ENCODE measurements at regions of chr14 and their contacts with region 1.

Region 1: GRCh38 chr14:64891839-64892375 is 12.2 kb upstream of the SPTB start:
- DNase-seq: peak; percentile 63
- ATAC-seq: peak; percentile 65
- H3K4me3 ChIP-seq: no peak overlapping the region
- H3K4me3 Mint-ChIP-seq: no peak overlapping the region
- H3K27ac ChIP-seq: no peak overlapping the region
- H3K27ac Mint-ChIP-seq: no peak overlapping the region
- H3K4me1 ChIP-seq: no peaks in the 10 kb centered on the region
- H3K4me1 Mint-ChIP-seq: no peaks in the 10 kb centered on the region
- H3K27me3 ChIP-seq: peaks cover 0 to 5% (median 2%) of the 10 kb centered on the region in 4 experiments
- H3K27me3 Mint-ChIP-seq: peaks cover 27% of the 10 kb centered on the region
- CTCF ChIP-seq: peak; percentile 74

Region 2: DNA sequence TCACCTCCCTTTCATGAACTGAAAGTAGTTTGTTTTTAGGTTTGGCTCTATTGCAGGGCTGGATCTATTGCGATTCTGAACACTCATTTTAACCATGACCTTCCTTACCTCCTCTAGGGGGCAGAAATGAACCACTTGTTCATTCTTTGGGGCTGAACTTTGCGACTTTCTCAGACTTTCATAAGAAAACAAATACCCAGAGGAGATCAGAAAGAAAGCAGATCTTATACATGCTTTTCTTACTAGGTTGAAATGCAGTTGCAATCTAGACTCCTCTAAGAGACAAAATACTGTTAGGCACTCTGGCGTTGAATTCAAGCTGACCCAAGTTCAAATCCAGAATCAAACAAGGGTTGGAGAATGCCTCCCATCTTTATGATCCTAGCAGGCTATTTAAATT is 220.3 kb before region 1 on chr14:
- CTCF ChIA-PET with region 1: interaction called, 16 read pairs
- POLR2A ChIA-PET with region 1: no interaction called
- intact Hi-C with region 1: loop called (anchors 5 kb)
- DNase-seq: peak; percentile 45
- ATAC-seq: no peak
- H3K4me3 ChIP-seq: no peak overlapping the region
- H3K4me3 Mint-ChIP-seq: no peak overlapping the region
- H3K27ac ChIP-seq: no peak overlapping the region
- H3K27ac Mint-ChIP-seq: no peak overlapping the region
- H3K4me1 ChIP-seq: no peaks in the 10 kb centered on the region
- H3K4me1 Mint-ChIP-seq: peaks cover 4% of the 10 kb centered on the region
- H3K27me3 ChIP-seq: peaks cover 0 to 7% (median 2%) of the 10 kb centered on the region in 4 experiments
- H3K27me3 Mint-ChIP-seq: peaks cover 20% of the 10 kb centered on the region
- CTCF ChIP-seq: peak; percentile 62

Region 3: GRCh38 chr14:64764641-64765520 is 127.0 kb before region 1 on chr14:
- CTCF ChIA-PET with region 1: interaction called, 16 read pairs
- POLR2A ChIA-PET with region 1: no interaction called
- intact Hi-C with region 1: loop called (anchors 5 kb)
- DNase-seq: peak; percentile 73
- ATAC-seq: peak; percentile 73
- H3K4me3 ChIP-seq: peak overlapping the region in 1 of 5 experiments; percentile 15
- H3K4me3 Mint-ChIP-seq: peak overlapping the region; percentile 54
- H3K27ac ChIP-seq: no peak overlapping the region
- H3K27ac Mint-ChIP-seq: no peak overlapping the region
- H3K4me1 ChIP-seq: peaks cover 6% of the 10 kb centered on the region in 2 donors
- H3K4me1 Mint-ChIP-seq: peaks cover 13% of the 10 kb centered on the region
- H3K27me3 ChIP-seq: peaks cover 0 to 14% (median 6%) of the 10 kb centered on the region in 4 experiments
- H3K27me3 Mint-ChIP-seq: peaks cover 30% of the 10 kb centered on the region
- CTCF ChIP-seq: peak; percentile 73

Region 4: DNA sequence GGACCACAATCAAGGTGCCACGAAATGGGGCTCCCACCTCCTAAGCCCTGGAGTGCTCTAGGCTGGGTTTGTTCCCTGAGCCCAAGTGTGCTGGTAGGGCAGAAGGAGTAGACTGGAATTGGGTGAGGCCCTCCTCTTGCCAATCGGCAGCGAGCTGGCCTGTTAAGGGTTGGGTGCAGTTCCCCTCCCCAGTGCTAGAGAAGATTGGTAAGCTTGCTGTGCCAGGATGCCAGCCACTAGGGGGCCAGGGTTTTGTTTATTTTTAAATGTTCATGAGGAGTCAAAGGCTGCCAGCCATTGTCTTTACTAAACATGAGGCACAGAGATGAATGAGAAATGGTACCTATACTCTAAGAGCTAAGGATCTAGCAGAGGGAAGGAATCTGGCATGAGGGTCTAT is 91.9 kb before region 1 on chr14:
- CTCF ChIA-PET with region 1: interaction called, 64 read pairs
- POLR2A ChIA-PET with region 1: no interaction called
- intact Hi-C with region 1: loop called (anchors 5 kb)
- DNase-seq: no peak
- ATAC-seq: no peak
- H3K4me3 ChIP-seq: no peak overlapping the region
- H3K4me3 Mint-ChIP-seq: no peak overlapping the region
- H3K27ac ChIP-seq: no peak overlapping the region
- H3K27ac Mint-ChIP-seq: no peak overlapping the region
- H3K4me1 ChIP-seq: no peaks in the 10 kb centered on the region
- H3K4me1 Mint-ChIP-seq: no peaks in the 10 kb centered on the region
- H3K27me3 ChIP-seq: peaks cover 0 to 6% (median 0%) of the 10 kb centered on the region in 4 experiments
- H3K27me3 Mint-ChIP-seq: peaks cover 32% of the 10 kb centered on the region
- CTCF ChIP-seq: peak; percentile 22

Region 5: DNA sequence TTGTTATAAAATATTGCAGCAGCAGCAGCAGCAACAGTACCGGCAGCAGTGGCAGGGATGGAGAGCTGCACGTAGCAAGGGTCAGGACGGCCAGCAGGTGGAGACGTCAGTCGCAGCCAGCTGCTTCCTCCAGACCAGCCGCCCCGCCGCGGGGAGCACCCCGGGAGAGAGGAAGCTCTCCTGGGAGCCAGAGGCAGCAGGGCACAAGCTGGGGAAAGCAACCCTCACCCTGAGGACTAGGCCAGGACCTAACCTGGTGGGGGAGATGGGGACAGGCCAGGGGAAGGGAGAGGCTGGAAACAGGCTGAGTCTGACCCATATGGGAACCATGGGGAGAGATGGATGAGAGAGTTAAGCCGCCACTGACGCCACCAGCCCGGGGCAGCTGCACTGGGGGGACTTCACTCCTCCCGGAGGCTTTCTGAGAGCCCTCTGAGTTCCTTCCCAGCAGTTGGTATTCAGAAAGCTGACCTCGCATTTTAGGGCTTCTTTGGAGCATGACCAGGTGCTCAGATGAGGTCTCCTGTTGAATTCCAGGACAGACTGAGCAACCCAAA is 68.5 kb before region 1 on chr14:
- CTCF ChIA-PET with region 1: interaction called, 105 read pairs
- POLR2A ChIA-PET with region 1: no interaction called
- intact Hi-C with region 1: loop called (anchors 5 kb)
- DNase-seq: peak; percentile 67
- ATAC-seq: peak; percentile 78
- H3K4me3 ChIP-seq: no peak overlapping the region
- H3K4me3 Mint-ChIP-seq: no peak overlapping the region
- H3K27ac ChIP-seq: no peak overlapping the region
- H3K27ac Mint-ChIP-seq: no peak overlapping the region
- H3K4me1 ChIP-seq: peaks cover 6 to 7% of the 10 kb centered on the region in 2 donors
- H3K4me1 Mint-ChIP-seq: peaks cover 6% of the 10 kb centered on the region
- H3K27me3 ChIP-seq: peaks cover 0 to 15% (median 3%) of the 10 kb centered on the region in 4 experiments
- H3K27me3 Mint-ChIP-seq: peaks cover 54% of the 10 kb centered on the region
- CTCF ChIP-seq: peak; percentile 71

Region 6: DNA sequence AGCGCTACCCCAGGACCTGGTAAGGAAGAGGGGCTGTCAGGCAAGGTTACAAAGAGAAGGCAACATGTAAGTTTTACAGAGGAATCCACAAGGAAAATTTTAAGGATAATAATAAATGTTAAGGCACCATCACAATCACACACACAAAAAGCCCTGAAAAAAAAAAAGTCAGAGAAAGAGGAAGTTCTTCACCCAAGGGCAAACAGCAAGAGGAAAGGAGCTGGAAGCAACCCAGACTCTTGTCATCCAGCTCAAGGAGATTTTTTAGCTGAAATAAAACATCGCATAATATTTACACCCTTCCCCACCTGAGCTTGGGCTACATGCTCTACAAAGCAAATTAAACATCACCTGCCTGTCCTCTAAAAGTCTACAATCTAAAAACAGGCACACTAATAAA is 21.7 kb before region 1 on chr14:
- CTCF ChIA-PET with region 1: interaction called, 17 read pairs
- POLR2A ChIA-PET with region 1: no interaction called
- intact Hi-C with region 1: no loop called
- DNase-seq: peak; percentile 24
- ATAC-seq: no peak
- H3K4me3 ChIP-seq: no peak overlapping the region
- H3K4me3 Mint-ChIP-seq: no peak overlapping the region
- H3K27ac ChIP-seq: no peak overlapping the region
- H3K27ac Mint-ChIP-seq: no peak overlapping the region
- H3K4me1 ChIP-seq: peaks cover 3 to 4% of the 10 kb centered on the region in 2 donors
- H3K4me1 Mint-ChIP-seq: peaks cover 6% of the 10 kb centered on the region
- H3K27me3 ChIP-seq: peaks cover 0 to 8% (median 3%) of the 10 kb centered on the region in 4 experiments
- H3K27me3 Mint-ChIP-seq: peaks cover 24% of the 10 kb centered on the region
- CTCF ChIP-seq: no peak

Region 7: GRCh38 chr14:64880221-64881121 is 11.4 kb before region 1 on chr14:
- CTCF ChIA-PET with region 1: interaction called, 36 read pairs
- POLR2A ChIA-PET with region 1: interaction called, 3 read pairs
- intact Hi-C with region 1: no loop called
- DNase-seq: peak; percentile 63
- ATAC-seq: peak; percentile 76
- H3K4me3 ChIP-seq: peak overlapping the region; percentile 16 to 65 (median 51)
- H3K4me3 Mint-ChIP-seq: peak overlapping the region; percentile 87
- H3K27ac ChIP-seq: no peak overlapping the region
- H3K27ac Mint-ChIP-seq: no peak overlapping the region
- H3K4me1 ChIP-seq: peaks cover 7 to 13% of the 10 kb centered on the region in 2 donors
- H3K4me1 Mint-ChIP-seq: peaks cover 12% of the 10 kb centered on the region
- H3K27me3 ChIP-seq: peaks cover 0 to 48% (median 35%) of the 10 kb centered on the region in 4 experiments
- H3K27me3 Mint-ChIP-seq: peaks cover 69% of the 10 kb centered on the region
- CTCF ChIP-seq: no peak

Measured in B cell (primary cell).